SK-N-SH (cell line): ENCODE measurements at regions of chr7 and their contacts with region 1.

Region 1: DNA sequence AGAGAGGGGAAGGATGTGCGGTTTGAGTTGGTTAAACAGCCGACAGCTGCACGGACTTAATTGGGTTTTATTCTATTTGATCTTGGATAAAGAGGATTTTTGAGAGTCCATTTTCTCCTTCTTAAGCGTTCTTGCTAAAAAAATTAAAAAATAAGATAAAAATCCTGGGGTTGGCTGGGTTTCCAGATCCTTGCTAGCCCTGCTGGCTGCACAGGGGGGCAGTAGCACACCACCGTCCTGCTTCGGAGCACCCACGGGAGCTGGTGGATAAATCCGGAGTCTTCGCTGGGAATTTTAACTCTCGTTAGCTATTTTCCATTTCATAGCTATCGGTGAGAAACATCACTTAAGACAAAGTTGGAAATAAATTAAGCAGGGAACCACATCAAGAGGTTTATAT is 792.0 kb downstream of the TYW1 start:
- DNase-seq: peak; percentile 77
- H3K4me3 ChIP-seq: peak overlapping the region in 1 of 2 experiments; percentile 45; a peak in 1 of 4 replicates
- H3K27ac ChIP-seq: no peak overlapping the region
- H3K4me1 ChIP-seq: peaks cover 0 to 9% of the 10 kb centered on the region in 2 experiments; a peak in 1 of 4 replicates
- H3K27me3 ChIP-seq: no peaks in the 10 kb centered on the region
- CTCF ChIP-seq: peak; percentile 37
- EP300 ChIP-seq: peak in 1 of 2 experiments; percentile 22; a peak in 1 of 4 replicates
- RAD21 ChIP-seq: peak; percentile 95

Region 2: GRCh38 chr7:67777119-67777518 is 11.6 kb before region 1 on chr7:
- CTCF ChIA-PET with region 1: interaction called, 10 read pairs
- POLR2A ChIA-PET with region 1: no interaction called
- DNase-seq: no peak
- H3K4me3 ChIP-seq: no peak overlapping the region
- H3K27ac ChIP-seq: no peak overlapping the region; a peak in 1 of 4 replicates
- H3K4me1 ChIP-seq: peaks cover 0 to 11% of the 10 kb centered on the region in 2 experiments; a peak in 1 of 4 replicates
- H3K27me3 ChIP-seq: no peaks in the 10 kb centered on the region
- CTCF ChIP-seq: no peak
- EP300 ChIP-seq: no peak
- RAD21 ChIP-seq: no peak

Region 3: GRCh38 chr7:67847092-67847787 is 58.6 kb after region 1 on chr7:
- CTCF ChIA-PET with region 1: interaction called, 11 read pairs
- POLR2A ChIA-PET with region 1: no interaction called
- DNase-seq: peak; percentile 60
- H3K4me3 ChIP-seq: no peak overlapping the region
- H3K27ac ChIP-seq: no peak overlapping the region
- H3K4me1 ChIP-seq: peaks cover 0 to 10% of the 10 kb centered on the region in 2 experiments; a peak in 2 of 4 replicates
- H3K27me3 ChIP-seq: no peaks in the 10 kb centered on the region
- CTCF ChIP-seq: no peak
- EP300 ChIP-seq: peak in 1 of 2 experiments; percentile 87; a peak in 2 of 4 replicates
- RAD21 ChIP-seq: peak; percentile 1; the same call in 1 of the 2 replicates

Region 4: GRCh38 chr7:67947651-67948050 is 159.0 kb after region 1 on chr7:
- CTCF ChIA-PET with region 1: no interaction called
- POLR2A ChIA-PET with region 1: no interaction called
- DNase-seq: no peak
- H3K4me3 ChIP-seq: no peak overlapping the region
- H3K27ac ChIP-seq: no peak overlapping the region
- H3K4me1 ChIP-seq: no peaks in the 10 kb centered on the region
- H3K27me3 ChIP-seq: no peaks in the 10 kb centered on the region
- CTCF ChIP-seq: no peak
- EP300 ChIP-seq: no peak
- RAD21 ChIP-seq: no peak